Activated naive CD4-positive, alpha-beta T cell treated with anti-CD3 and anti-CD28 coated beads for 36 hours (primary cell): ENCODE measurements at regions of chr10 and their contacts with region 1.

Region 1: DNA sequence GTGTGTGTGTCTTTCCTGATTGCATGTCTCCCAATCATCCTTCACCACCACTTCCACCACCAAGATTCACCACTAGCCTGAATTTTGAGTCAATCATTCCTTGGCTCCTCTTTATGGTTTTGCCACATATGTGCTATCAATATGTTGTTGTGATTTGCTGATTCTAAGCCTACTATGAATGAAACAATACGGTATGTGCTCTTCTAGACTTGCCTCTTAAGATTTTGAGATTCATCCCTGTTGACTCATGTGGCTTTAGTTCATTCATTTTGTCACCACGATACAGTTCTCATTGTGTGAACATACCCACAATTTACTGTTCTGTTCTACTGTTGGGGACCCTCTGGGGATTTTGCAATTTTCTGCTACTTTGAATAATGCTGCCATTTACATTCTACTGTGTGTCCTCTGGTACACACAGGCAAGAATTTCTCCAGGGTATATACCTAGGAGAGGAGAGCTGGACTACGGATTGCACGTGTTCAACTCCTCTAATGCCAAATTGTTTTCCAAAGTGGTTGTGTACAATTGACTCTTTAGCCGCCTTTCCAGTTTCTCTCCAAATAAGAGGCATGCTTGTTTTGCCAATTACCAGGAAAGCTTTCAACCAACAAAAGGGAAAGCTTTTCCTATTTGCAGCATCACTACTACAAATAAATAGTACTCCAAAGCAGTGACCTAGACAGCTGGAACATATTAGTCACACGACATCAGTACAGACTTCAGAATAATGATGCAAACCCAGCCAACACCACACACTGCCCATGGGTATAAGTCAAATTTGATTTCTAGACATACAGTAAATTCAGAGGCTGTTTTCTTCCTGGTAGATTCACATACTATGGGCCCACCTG is 30.0 kb downstream of the SGMS1 start:
- DNase-seq: no peak
- H3K4me3 Mint-ChIP-seq: no peak overlapping the region
- H3K27ac Mint-ChIP-seq: no peak overlapping the region
- H3K4me1 Mint-ChIP-seq: peaks cover 22% of the 10 kb centered on the region
- H3K27me3 Mint-ChIP-seq: no peaks in the 10 kb centered on the region

Region 2: DNA sequence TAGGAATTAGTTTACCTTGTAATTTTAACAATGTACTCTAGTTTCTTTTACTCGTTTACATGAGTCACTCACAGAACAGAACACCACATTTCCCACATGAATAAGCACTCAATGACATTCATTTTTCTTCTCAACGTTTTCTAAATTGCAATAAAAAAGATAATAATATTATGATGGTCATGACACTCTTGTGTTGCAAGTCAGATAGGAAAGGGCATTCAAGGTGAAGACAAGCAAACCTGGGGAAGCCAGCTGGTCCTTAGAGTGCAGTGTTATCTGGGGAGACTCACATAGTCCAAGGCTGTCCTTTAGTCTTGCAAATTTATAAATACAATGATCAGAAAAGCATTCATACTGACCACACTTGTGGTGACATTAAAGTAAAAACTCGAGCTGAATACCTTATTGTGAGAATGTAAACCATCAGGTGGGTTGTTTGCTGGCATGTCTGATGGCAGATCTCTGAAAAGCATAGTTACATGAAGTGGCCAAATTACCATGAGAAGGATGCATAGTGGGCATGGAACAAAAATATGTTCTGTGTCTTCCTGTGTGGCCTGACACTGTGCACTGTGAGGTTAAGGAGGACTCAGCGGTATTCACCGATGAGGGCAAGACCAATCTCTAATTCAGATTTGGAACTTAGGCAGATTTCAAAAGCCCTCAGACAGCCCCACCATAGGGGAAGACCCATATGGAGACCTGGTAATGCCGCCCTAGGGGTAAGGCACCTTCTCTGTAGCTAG is 183.5 kb before region 1 on chr10:
- CTCF ChIA-PET with region 1: no interaction called
- intact Hi-C with region 1: no loop called
- DNase-seq: no peak
- H3K4me3 Mint-ChIP-seq: no peak overlapping the region
- H3K27ac Mint-ChIP-seq: no peak overlapping the region
- H3K4me1 Mint-ChIP-seq: peaks cover 11% of the 10 kb centered on the region
- H3K27me3 Mint-ChIP-seq: no peaks in the 10 kb centered on the region

Region 3: GRCh38 chr10:50605269-50606263 is 11.8 kb after region 1 on chr10:
- CTCF ChIA-PET with region 1: no interaction called
- intact Hi-C with region 1: no loop called
- DNase-seq: no peak
- H3K4me3 Mint-ChIP-seq: no peak overlapping the region
- H3K27ac Mint-ChIP-seq: no peak overlapping the region
- H3K4me1 Mint-ChIP-seq: peaks cover 62% of the 10 kb centered on the region
- H3K27me3 Mint-ChIP-seq: no peaks in the 10 kb centered on the region

Region 4: DNA sequence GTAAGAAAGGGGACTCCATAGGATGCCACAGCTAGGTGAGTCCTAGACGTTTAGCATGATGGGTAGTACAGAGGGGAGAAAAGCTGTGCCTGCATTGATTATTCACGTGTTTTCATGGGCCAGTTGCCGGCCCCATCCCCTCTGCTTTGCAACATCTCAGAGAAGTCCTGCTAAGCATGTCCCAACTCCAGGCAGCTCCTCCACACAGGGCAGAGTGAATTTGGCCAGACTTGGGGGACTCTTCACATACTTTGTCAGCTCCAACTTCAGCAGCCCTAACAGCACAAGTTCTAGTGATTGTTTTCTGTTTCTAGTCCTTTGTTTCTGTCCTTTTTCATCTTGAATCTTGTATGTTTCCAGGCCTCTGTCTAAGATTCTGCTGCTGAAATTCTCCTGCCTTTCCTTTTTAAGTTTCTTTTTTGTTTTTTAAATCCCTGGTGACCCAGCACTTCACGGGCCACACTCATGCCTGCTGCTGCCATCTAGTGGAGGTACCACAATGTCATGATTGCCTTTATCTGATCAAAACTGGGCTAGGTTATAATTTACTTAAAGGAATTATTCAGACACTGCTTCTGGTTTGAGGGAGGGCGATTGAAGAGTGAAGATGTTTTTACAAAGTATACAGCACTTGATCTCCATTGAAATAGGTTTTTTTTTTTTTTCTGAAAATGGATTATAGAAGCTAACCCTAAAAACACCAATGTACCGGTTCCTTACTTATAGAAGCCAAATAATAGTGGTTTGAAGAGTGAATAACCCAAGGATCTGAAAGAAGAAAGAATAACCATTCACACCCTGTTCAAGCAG is 828.8 kb after region 1 on chr10:
- CTCF ChIA-PET with region 1: no interaction called
- intact Hi-C with region 1: loop called (anchors 10 kb)
- DNase-seq: peak; percentile 52
- H3K4me3 Mint-ChIP-seq: no peak overlapping the region
- H3K27ac Mint-ChIP-seq: no peak overlapping the region
- H3K4me1 Mint-ChIP-seq: no peaks in the 10 kb centered on the region
- H3K27me3 Mint-ChIP-seq: peaks cover 11% of the 10 kb centered on the region